CD8-positive, alpha-beta T cell (primary cell): ENCODE measurements at regions of chr5 and their contacts with region 1.

Region 1: GRCh38 chr5:53109443-53110127 is at the start of gene MOCS2:
- DNase-seq: peak; percentile 73 to 95 (median 90)
- ATAC-seq: peak; percentile 97
- H3K4me3 ChIP-seq: peak within 1 kb of the TSS; percentile 59 to 85
- H3K4me3 Mint-ChIP-seq: peak within 1 kb of the TSS; percentile 96
- H3K27ac ChIP-seq: peak within 1 kb of the TSS; percentile 62 to 75
- H3K27ac Mint-ChIP-seq: peak within 1 kb of the TSS; percentile 93
- H3K4me1 ChIP-seq: peaks cover 34% of the 10 kb centered on the region
- H3K4me1 Mint-ChIP-seq: peaks cover 55% of the 10 kb centered on the region
- H3K27me3 ChIP-seq: no peaks in the 10 kb centered on the region
- H3K27me3 Mint-ChIP-seq: no peaks in the 10 kb centered on the region
- CTCF ChIP-seq: no peak
- total RNA-seq, gene MOCS2: 16.5 to 18.2 TPM

Region 2: DNA sequence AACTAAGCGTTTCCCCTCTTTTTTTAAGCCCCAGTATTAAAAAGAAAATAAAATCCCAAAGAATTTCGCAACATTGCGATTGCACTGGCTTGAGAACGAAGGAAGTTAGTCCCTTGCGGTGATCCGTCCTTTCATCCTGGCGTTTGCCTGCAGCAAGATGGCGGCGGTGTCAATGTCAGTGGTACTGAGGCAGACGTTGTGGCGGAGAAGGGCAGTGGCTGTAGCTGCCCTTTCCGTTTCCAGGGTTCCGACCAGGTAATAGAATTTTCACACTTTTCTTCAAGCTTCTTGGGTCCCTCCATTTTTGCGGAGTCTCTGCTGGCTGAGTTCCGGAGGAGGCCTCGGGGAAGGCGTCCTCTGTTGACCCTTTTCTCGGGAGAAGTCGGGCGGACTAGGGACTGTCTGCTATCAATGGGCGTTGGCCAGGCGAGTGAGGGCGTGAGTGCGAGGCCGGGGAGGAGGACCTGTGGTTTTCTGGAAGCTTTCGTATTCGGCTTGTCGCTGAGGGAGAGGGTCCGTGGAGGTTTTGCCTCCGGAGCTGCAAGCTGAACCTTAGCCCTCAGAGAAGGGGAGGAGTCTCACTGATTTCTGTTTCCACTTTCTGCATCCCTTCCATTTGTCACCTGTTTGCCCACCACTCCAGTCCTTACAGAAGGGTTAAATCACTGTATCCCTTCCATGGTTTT is 451.1 kb after region 1 on chr5 and contains the start of gene NDUFS4:
- CTCF ChIA-PET with region 1: no interaction called
- POLR2A ChIA-PET with region 1: no interaction called
- intact Hi-C with region 1: loop called (anchors 10 kb)
- DNase-seq: peak; percentile 54 to 88 (median 78)
- ATAC-seq: peak; percentile 86
- H3K4me3 ChIP-seq: peak within 1 kb of the TSS; percentile 91 to 96
- H3K4me3 Mint-ChIP-seq: peak within 1 kb of the TSS; percentile 100
- H3K27ac ChIP-seq: peak within 1 kb of the TSS; percentile 81 to 84
- H3K27ac Mint-ChIP-seq: peak within 1 kb of the TSS; percentile 99
- H3K4me1 ChIP-seq: peaks cover 15% of the 10 kb centered on the region
- H3K4me1 Mint-ChIP-seq: peaks cover 47% of the 10 kb centered on the region
- H3K27me3 ChIP-seq: no peaks in the 10 kb centered on the region
- H3K27me3 Mint-ChIP-seq: peaks cover 14% of the 10 kb centered on the region
- CTCF ChIP-seq: no peak
- total RNA-seq, gene NDUFS4: 22.8 to 24.3 TPM